ENCODE measurements at regions of chr1 and their contacts with region 1.

Region 1: DNA sequence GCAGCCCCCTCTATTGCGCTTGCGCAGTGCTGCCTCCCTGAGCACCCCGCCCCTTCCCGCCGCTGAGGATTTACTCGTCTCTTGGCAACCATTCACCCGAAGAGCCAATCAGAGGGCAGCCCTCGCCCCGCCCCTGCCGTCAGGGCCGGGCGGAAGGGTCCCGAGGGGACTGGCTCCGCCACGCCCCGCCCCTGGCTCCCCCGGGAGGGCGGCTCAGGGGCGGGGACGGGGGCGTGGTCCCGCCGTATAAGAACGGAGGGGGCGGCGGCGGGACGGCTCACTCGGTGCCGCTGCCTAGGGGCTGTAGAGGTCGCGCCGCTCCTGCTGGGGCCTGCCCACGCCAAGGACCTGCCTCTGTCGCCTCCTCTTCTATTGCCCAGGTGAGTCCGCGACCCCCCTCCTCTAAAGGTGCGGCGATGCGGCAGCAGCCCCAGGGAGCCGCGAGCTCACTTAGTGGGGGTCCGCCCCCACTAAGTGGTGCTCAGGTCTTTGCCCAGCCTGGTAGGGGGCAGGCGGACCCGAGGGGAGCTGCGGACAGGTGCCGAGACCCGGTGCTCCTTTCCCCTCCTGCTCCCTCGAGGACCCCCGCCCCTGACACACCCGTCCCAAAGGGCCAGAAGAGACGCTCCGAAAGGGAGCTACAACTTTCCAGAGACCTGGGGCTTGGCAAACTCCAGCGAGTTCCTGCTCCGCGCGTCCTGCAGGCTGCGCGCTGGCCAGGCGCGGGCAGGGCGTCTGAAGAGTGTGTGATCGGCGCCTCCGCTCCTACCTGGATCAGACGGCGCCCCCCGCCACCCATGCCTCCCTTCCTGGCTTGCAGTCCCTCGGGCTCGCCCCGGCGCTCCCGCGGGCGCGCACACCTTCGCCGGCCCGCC is at the start of gene TENT5C:
- DNase-seq: peak; percentile 95
- ATAC-seq: peak; percentile 98
- H3K4me3 ChIP-seq: peak within 1 kb of the TSS; percentile 84
- H3K27ac ChIP-seq: peak within 1 kb of the TSS; percentile 47
- H3K4me1 ChIP-seq: peaks cover 5% of the 10 kb centered on the region; the same call in 1 of the 2 replicates
- H3K27me3 ChIP-seq: 0 out of 2 replicates have a peak, but pooled peaks cover 2% of the 10 kb centered on the region
- CTCF ChIP-seq: no peak
- POLR2A ChIP-seq: peak; percentile 96
- RAD21 ChIP-seq: no peak
- total RNA-seq, gene TENT5C: 4.1 and 5.3 TPM in 2 replicates

Region 2: GRCh38 chr1:117367047-117368018 is 238.7 kb before region 1 on chr1 and contains the start of gene MAN1A2:
- CTCF ChIA-PET with region 1: no interaction called
- POLR2A ChIA-PET with region 1: no interaction called
- dilution Hi-C with region 1: no loop called
- in situ Hi-C with region 1: no loop called
- intact Hi-C with region 1: loop called (anchors 1 kb)
- DNase-seq: peak; percentile 69
- ATAC-seq: peak; percentile 83
- H3K4me3 ChIP-seq: peak within 1 kb of the TSS; percentile 90
- H3K27ac ChIP-seq: peak within 1 kb of the TSS; percentile 97
- H3K4me1 ChIP-seq: peaks cover 6% of the 10 kb centered on the region
- H3K27me3 ChIP-seq: no peaks in the 10 kb centered on the region
- CTCF ChIP-seq: no peak
- POLR2A ChIP-seq: no peak
- RAD21 ChIP-seq: no peak
- total RNA-seq, gene MAN1A2: 29.4 and 60.8 TPM in 2 replicates

Region 3: DNA sequence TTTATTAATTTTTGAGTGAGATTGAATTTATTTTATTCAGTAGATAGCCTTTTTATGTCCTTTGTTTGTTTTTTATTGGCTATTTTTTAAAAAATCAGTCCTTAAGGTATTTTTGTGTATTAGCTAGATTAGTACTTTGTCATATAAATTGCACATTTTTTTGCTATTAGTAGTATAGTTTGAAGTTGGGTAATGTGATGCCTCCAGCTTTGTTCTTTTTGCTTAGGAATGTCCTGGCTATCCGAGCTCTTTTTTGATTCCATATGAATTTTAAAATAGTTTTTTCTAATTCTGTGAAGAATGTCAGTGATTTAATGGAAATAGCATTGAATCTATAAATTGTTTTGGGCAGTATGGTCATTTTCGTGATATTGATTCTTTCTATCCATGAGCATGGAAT is 158.3 kb before region 1 on chr1:
- CTCF ChIA-PET with region 1: no interaction called
- POLR2A ChIA-PET with region 1: no interaction called
- dilution Hi-C with region 1: no loop called
- in situ Hi-C with region 1: no loop called
- intact Hi-C with region 1: no loop called
- DNase-seq: peak; percentile 34
- ATAC-seq: peak; percentile 70
- H3K4me3 ChIP-seq: no peak overlapping the region
- H3K27ac ChIP-seq: no peak overlapping the region
- H3K4me1 ChIP-seq: peaks cover 3% of the 10 kb centered on the region; the same call in 1 of the 2 replicates
- H3K27me3 ChIP-seq: no peaks in the 10 kb centered on the region
- CTCF ChIP-seq: no peak
- POLR2A ChIP-seq: no peak
- RAD21 ChIP-seq: no peak

Region 4: DNA sequence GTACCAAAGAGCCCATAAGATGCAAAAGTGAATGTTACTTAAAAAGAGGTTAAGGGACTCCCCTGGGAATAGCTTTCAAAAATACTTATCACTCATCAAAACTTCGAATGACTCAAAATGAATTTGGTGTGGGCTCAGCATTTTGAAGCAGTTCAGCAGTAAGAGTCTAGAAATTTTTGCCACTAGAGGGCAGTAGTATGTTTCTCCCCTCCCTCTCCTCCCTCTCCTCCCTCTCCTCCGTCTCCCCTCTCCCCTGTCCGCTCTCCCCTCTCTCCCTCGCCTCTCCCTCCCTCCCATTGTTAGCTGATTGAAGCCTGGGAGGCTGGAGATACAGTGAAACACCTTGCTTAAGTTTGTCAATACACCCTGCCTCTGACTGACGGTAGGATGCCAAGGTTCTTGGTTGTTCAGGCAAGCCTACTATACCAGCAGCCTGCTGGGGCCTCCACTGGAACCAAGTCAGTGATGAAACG is 71.0 kb before region 1 on chr1:
- CTCF ChIA-PET with region 1: no interaction called
- POLR2A ChIA-PET with region 1: no interaction called
- dilution Hi-C with region 1: no loop called
- in situ Hi-C with region 1: no loop called
- intact Hi-C with region 1: loop called (anchors 5 kb)
- DNase-seq: peak; percentile 72
- ATAC-seq: peak; percentile 83
- H3K4me3 ChIP-seq: no peak overlapping the region; the same call in 1 of the 2 replicates
- H3K27ac ChIP-seq: no peak overlapping the region
- H3K4me1 ChIP-seq: no peaks in the 10 kb centered on the region
- H3K27me3 ChIP-seq: no peaks in the 10 kb centered on the region
- CTCF ChIP-seq: peak; percentile 69
- POLR2A ChIP-seq: no peak
- RAD21 ChIP-seq: peak; percentile 64

Region 5: DNA sequence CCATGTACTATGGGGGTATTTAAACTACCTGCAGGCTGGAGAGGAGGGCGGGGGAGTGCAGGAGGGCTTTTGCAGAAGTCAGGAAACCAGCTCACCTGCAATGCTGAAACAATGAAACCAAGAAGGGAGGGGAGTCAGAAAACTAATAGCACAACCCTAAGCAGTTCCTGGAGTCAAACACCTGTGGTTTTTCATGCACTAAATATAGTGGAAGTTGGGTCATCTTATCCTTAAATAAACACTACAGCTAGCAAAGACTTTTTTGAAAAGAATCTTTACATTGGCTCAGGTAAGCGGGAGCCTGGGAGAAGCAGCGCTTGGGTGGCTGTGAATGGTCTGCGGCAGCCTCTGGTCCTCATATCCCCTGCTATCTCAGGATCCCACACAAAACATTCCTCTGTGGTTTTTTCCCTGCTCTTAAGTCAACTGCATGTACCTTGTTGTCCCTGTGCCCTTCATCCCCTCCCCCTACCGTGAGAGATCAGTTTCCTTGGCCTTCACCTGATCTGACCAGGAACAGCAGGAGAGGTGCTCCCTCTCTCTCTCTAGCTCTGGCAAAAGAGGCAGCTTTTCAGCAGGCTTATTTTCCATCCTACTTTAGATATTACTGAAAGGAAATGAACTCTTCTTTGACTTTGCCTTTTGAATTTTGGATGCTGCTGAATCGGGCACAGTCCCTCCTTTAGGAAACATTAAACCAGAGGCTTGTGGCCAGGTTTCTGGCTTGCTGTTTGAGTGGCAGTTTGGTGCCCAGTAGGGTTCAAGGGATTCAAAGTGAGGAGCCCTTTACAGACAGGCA is 26.5 kb after region 1 on chr1:
- CTCF ChIA-PET with region 1: no interaction called
- POLR2A ChIA-PET with region 1: no interaction called
- dilution Hi-C with region 1: no loop called
- in situ Hi-C with region 1: no loop called
- intact Hi-C with region 1: no loop called
- DNase-seq: no peak
- ATAC-seq: no peak
- H3K4me3 ChIP-seq: no peak overlapping the region
- H3K27ac ChIP-seq: no peak overlapping the region
- H3K4me1 ChIP-seq: peaks cover 2% of the 10 kb centered on the region; the same call in 1 of the 2 replicates
- H3K27me3 ChIP-seq: no peaks in the 10 kb centered on the region; the same call in 1 of the 2 replicates
- CTCF ChIP-seq: no peak
- POLR2A ChIP-seq: no peak
- RAD21 ChIP-seq: no peak

Region 6: GRCh38 chr1:117685936-117686806 is 80.2 kb after region 1 on chr1:
- CTCF ChIA-PET with region 1: no interaction called
- POLR2A ChIA-PET with region 1: no interaction called
- dilution Hi-C with region 1: no loop called
- in situ Hi-C with region 1: no loop called
- intact Hi-C with region 1: loop called (anchors 2 kb)
- DNase-seq: no peak
- ATAC-seq: no peak
- H3K4me3 ChIP-seq: no peak overlapping the region
- H3K27ac ChIP-seq: no peak overlapping the region
- H3K4me1 ChIP-seq: peaks cover 23% of the 10 kb centered on the region
- H3K27me3 ChIP-seq: no peaks in the 10 kb centered on the region
- CTCF ChIP-seq: no peak
- POLR2A ChIP-seq: no peak
- RAD21 ChIP-seq: no peak

Region 7: DNA sequence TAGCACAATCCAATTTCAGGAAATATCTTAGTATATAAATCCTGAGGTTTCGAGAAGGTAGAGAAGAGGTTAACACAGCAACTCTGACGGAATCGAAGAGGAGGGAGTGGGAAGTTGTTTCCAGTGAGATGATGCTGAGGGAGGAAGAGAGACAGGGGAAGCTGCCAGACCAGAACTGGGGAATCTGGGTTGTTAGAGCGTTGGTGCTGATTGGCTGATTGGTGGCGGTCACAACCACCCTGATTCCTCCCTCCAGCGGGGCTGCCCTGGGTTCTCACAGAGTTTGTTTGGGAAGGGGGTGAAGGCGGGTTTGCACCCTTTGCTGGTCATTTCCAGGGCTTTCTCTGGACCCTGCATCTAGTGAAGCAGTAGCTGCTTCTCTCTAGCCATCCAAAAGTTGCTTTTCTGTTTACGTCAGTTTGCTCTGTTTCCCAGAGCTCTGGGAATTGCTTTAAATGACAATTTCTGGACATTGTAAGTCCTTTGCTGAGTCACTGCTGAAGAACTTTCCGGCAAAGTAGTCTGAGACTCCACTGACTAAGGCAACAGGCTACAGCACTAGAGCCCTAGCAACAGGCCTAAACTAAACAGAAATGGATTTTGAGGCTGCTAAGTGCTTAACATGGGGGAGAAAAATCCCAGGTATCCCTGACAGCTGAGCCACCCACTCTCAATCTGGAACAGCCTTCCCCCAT is 89.9 kb after region 1 on chr1:
- CTCF ChIA-PET with region 1: no interaction called
- POLR2A ChIA-PET with region 1: interaction called, 9 read pairs
- dilution Hi-C with region 1: no loop called
- in situ Hi-C with region 1: loop called (anchors 5 kb)
- intact Hi-C with region 1: loop called (anchors 2 kb)
- DNase-seq: peak; percentile 96
- ATAC-seq: peak; percentile 91
- H3K4me3 ChIP-seq: peak overlapping the region; percentile 26; the same call in 1 of the 2 replicates
- H3K27ac ChIP-seq: peak overlapping the region; percentile 89
- H3K4me1 ChIP-seq: peaks cover 21% of the 10 kb centered on the region
- H3K27me3 ChIP-seq: no peaks in the 10 kb centered on the region
- CTCF ChIP-seq: no peak
- POLR2A ChIP-seq: peak; percentile 19; the same call in 1 of the 2 replicates
- RAD21 ChIP-seq: no peak

Region 8: GRCh38 chr1:117821782-117822447 is 215.9 kb after region 1 on chr1:
- CTCF ChIA-PET with region 1: no interaction called
- POLR2A ChIA-PET with region 1: no interaction called
- dilution Hi-C with region 1: no loop called
- in situ Hi-C with region 1: no loop called
- intact Hi-C with region 1: loop called (anchors 5 kb)
- DNase-seq: peak; percentile 99
- ATAC-seq: peak; percentile 74
- H3K4me3 ChIP-seq: no peak overlapping the region
- H3K27ac ChIP-seq: peak overlapping the region; percentile 96
- H3K4me1 ChIP-seq: peaks cover 37% of the 10 kb centered on the region
- H3K27me3 ChIP-seq: no peaks in the 10 kb centered on the region
- CTCF ChIP-seq: no peak
- POLR2A ChIP-seq: no peak
- RAD21 ChIP-seq: no peak